Mammary epithelial cell (primary cell): ENCODE measurements at regions of chr12 and their contacts with region 1.

Region 1: GRCh38 chr12:26918309-26919215 is 19.2 kb downstream of the INTS13 start:
- DNase-seq: no peak
- H3K4me3 ChIP-seq: no peak overlapping the region
- H3K27ac ChIP-seq: no peak overlapping the region
- H3K4me1 ChIP-seq: no peaks in the 10 kb centered on the region
- H3K27me3 ChIP-seq: no peaks in the 10 kb centered on the region
- CTCF ChIP-seq: no peak

Region 2: GRCh38 chr12:26884765-26885576 is 33.6 kb before region 1 on chr12:
- CTCF ChIA-PET with region 1: no interaction called
- dilution Hi-C with region 1: loop called (anchors 5 kb)
- in situ Hi-C with region 1: no loop called
- intact Hi-C with region 1: no loop called
- DNase-seq: peak; percentile 75
- H3K4me3 ChIP-seq: no peak overlapping the region
- H3K27ac ChIP-seq: no peak overlapping the region
- H3K4me1 ChIP-seq: peaks cover 3% of the 10 kb centered on the region
- H3K27me3 ChIP-seq: no peaks in the 10 kb centered on the region
- CTCF ChIP-seq: peak; percentile 95 to 97